GM10248 (cell line): ENCODE measurements at regions of chr1 and their contacts with region 1.

Region 1: DNA sequence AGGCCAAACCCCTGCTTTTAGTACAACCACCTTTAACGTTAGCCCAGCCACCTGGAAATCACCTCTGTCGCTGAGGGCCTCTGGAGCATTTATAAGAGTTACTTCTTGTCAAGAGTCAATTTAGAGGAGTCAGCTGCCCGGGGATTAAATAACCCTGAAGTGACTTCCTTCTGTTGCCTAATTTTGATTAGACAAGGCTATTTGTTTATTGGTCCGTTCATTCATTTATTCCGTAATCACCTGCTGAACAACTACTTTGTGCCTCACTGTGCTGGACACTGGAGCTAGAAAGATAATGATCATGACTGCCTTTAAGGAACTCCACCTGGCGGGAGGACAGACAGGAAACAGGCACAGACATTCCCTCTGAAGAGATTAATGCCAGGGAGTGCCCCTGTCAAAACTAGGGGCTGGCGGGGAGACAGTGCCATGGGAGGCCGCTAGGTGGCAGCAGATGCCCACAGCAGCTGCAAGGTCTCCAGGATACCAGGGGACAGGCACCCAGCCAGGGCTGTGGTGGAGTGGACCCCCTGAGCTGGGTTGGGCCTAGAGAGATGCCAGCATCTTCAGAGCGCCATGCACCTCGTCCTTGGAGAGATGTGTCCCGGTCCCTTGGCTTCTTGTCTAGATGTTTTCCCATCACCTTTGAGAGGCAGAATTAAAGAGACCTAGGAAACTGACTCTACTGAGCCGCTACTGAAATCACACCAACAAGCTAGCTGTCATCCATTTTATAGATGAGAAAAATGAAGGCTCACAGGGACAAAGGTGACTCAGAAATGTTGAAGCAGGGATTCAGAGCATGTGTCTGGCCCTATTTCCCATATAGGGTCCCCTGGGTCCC is 3.7 kb downstream of the REN start:
- DNase-seq: peak; percentile 85
- CTCF ChIP-seq: peak; percentile 98

Region 2: GRCh38 chr1:204151552-204152309 is 10.7 kb before region 1 on chr1 and contains the start of gene ETNK2:
- CTCF ChIA-PET with region 1: interaction called, 29 read pairs
- POLR2A ChIA-PET with region 1: no interaction called
- DNase-seq: peak; percentile 51
- CTCF ChIP-seq: no peak

Region 3: DNA sequence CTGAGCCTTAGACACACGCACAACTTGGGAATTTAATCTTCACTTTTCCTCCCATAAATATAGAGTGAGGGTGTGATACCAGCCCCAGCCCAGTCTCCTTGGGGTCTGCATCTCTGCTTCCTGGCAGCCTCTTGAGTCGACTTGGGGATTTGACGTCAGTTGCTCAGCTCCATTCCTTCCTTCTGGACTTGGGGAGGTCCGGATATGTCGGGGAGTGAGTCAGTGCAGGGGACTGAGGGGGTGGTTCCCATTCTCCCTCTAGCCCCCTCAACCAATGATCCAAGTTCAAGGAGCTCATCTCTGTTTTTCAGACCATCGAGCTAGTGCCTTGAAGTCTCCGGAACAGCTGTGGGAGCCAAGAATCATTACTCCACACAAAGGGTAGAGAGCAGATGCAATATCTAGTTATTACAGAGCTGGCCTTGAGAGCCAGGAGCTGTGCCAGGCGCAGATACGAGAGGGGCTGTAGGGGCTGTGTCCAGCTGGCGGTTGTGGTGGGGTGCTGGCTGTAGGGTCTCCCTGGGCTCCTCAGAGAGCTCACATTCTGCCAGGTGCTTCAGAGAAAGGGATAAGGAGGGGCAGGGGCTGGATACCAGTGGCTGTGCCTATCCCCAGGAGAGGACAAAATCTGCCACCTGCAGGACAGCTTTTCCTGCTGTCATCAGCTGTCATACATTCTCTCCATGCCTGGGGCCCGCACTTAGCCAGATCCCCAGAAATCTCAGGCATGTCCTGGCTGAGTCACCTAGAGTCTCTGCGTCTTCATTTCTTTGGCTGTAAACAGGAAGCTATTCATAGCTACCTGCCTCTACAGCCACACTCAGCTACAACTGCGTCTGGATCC is 35.9 kb after region 1 on chr1:
- CTCF ChIA-PET with region 1: interaction called, 10 read pairs
- POLR2A ChIA-PET with region 1: no interaction called
- DNase-seq: no peak
- CTCF ChIP-seq: no peak

Region 4: GRCh38 chr1:204207136-204207616 is 44.7 kb after region 1 on chr1:
- CTCF ChIA-PET with region 1: interaction called, 66 read pairs
- POLR2A ChIA-PET with region 1: no interaction called
- DNase-seq: peak; percentile 84
- CTCF ChIP-seq: peak; percentile 91